Activated CD4-positive, alpha-beta memory T cell treated with anti-CD3 and anti-CD28 coated beads for 36 hours (primary cell): ENCODE measurements at regions of chr2 and their contacts with region 1.

Region 1: DNA sequence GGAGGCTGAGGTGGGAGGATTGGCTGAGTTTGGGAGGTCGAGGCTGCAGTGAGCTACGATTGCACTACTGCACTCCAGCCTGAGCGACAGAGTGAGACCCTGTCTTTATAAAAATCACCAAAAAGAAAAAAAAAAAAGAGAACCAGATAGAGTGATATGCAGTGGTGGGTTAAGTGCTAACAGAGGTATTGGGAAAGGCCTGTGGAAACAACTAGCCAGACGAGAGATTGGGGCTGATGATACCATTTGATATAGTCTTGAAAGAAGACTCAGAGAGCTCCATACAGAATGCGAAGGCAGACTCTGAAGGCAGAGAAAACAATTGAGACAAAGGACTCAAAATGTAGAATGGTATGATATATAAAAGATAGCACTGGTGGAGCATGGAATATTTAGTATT is 134.1 kb downstream of the CDC42EP3 start:
- DNase-seq: no peak
- H3K4me3 Mint-ChIP-seq: no peak overlapping the region
- H3K27ac Mint-ChIP-seq: no peak overlapping the region
- H3K4me1 Mint-ChIP-seq: no peaks in the 10 kb centered on the region
- H3K27me3 Mint-ChIP-seq: peaks cover 1% of the 10 kb centered on the region

Region 2: GRCh38 chr2:37168217-37168981 is 368.9 kb before region 1 on chr2:
- CTCF ChIA-PET with region 1: no interaction called
- POLR2A ChIA-PET with region 1: no interaction called
- intact Hi-C with region 1: loop called (anchors 5 kb)
- DNase-seq: peak; percentile 41
- H3K4me3 Mint-ChIP-seq: no peak overlapping the region
- H3K27ac Mint-ChIP-seq: no peak overlapping the region
- H3K4me1 Mint-ChIP-seq: peaks cover 2% of the 10 kb centered on the region
- H3K27me3 Mint-ChIP-seq: no peaks in the 10 kb centered on the region

Region 3: GRCh38 chr2:37342591-37343220 is 194.6 kb before region 1 on chr2:
- CTCF ChIA-PET with region 1: no interaction called
- POLR2A ChIA-PET with region 1: no interaction called
- intact Hi-C with region 1: no loop called
- DNase-seq: no peak
- H3K4me3 Mint-ChIP-seq: no peak overlapping the region
- H3K27ac Mint-ChIP-seq: no peak overlapping the region
- H3K4me1 Mint-ChIP-seq: peaks cover 25% of the 10 kb centered on the region
- H3K27me3 Mint-ChIP-seq: peaks cover 26% of the 10 kb centered on the region

Region 4: GRCh38 chr2:37388074-37388473 is 149.2 kb before region 1 on chr2:
- CTCF ChIA-PET with region 1: no interaction called
- POLR2A ChIA-PET with region 1: no interaction called
- intact Hi-C with region 1: no loop called
- DNase-seq: no peak
- H3K4me3 Mint-ChIP-seq: no peak overlapping the region
- H3K27ac Mint-ChIP-seq: no peak overlapping the region
- H3K4me1 Mint-ChIP-seq: peaks cover 13% of the 10 kb centered on the region
- H3K27me3 Mint-ChIP-seq: no peaks in the 10 kb centered on the region

Region 5: GRCh38 chr2:37459095-37459981 is 78.0 kb before region 1 on chr2:
- CTCF ChIA-PET with region 1: no interaction called
- POLR2A ChIA-PET with region 1: no interaction called
- intact Hi-C with region 1: no loop called
- DNase-seq: no peak
- H3K4me3 Mint-ChIP-seq: no peak overlapping the region
- H3K27ac Mint-ChIP-seq: peak overlapping the region; percentile 68
- H3K4me1 Mint-ChIP-seq: peaks cover 53% of the 10 kb centered on the region
- H3K27me3 Mint-ChIP-seq: no peaks in the 10 kb centered on the region